Activated CD4-positive, alpha-beta T cell treated with anti-CD3 and anti-CD28 coated beads for 36 hours (primary cell): ENCODE measurements at regions of chr7 and their contacts with region 1.

Region 1: DNA sequence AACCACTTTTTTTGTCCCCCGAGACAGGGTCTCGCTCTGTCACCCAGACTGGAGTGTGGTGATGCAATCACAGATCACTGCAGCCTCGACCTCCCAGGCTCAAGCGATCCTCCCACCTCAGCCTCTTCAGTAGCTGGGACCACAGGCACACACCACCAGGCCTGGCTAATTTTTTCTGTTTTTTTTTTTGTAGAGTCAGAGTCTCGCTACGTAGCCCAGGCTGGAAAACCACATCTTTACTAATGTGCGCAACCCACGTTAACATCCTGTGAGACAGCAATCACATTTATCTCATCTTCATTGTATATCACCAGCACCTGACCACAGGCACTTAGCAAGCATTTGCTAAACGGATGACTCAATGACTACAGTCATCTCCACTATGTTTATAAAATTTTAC is 77.8 kb upstream of the ATP6V0A4 start:
- DNase-seq: peak; percentile 80
- ATAC-seq: peak; percentile 98
- H3K4me3 Mint-ChIP-seq: no peak overlapping the region
- H3K27ac Mint-ChIP-seq: no peak overlapping the region
- H3K4me1 Mint-ChIP-seq: peaks cover 22% of the 10 kb centered on the region
- H3K27me3 Mint-ChIP-seq: no peaks in the 10 kb centered on the region

Region 2: GRCh38 chr7:138459413-138460175 is 416.2 kb before region 1 on chr7:
- CTCF ChIA-PET with region 1: no interaction called
- POLR2A ChIA-PET with region 1: no interaction called
- intact Hi-C with region 1: loop called in 1 of 2 experiments (anchors 5 kb)
- DNase-seq: peak; percentile 99
- ATAC-seq: peak; percentile 88
- H3K4me3 Mint-ChIP-seq: peak overlapping the region; percentile 85
- H3K27ac Mint-ChIP-seq: peak overlapping the region; percentile 85
- H3K4me1 Mint-ChIP-seq: peaks cover 25% of the 10 kb centered on the region
- H3K27me3 Mint-ChIP-seq: no peaks in the 10 kb centered on the region

Region 3: DNA sequence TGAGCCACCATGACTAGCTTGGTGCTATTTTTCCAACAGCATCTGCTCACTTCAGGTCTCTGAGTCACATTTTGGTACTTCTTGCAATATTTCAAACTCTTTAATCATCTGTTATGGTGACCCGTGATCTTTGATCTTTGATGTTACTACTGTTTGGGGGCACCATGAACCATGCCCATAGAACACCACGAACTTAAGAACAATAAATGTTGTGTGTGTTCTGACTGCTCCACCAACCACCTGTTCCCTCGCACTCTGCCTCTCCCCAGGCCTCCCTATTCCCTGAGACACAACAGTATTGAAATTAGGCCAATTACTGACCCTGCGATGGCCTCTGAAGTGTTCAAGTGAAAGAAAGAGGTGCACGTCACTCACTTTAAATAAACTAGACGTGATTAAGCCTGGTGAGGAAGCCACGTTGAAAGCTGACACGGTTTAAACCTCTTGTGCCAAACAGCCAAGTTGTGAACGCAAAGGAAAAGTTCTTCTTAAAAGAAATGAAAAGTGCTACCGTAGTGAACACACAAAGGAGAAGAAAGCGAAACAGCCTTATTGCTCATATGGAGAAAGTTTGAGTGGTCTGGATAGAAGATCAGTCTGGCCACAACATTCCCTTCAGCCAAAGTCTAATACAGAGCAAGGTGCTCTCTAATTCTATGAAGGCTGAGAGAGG is 50.6 kb before region 1 on chr7:
- CTCF ChIA-PET with region 1: no interaction called
- POLR2A ChIA-PET with region 1: no interaction called
- intact Hi-C with region 1: no loop called
- DNase-seq: no peak
- ATAC-seq: peak; percentile 69
- H3K4me3 Mint-ChIP-seq: no peak overlapping the region
- H3K27ac Mint-ChIP-seq: peak overlapping the region; percentile 7
- H3K4me1 Mint-ChIP-seq: peaks cover 7% of the 10 kb centered on the region
- H3K27me3 Mint-ChIP-seq: peaks cover 2% of the 10 kb centered on the region